Activated CD8-positive, alpha-beta T cell treated with anti-CD3 and anti-CD28 coated beads for 36 hours (primary cell): ENCODE measurements at regions of chr2 and their contacts with region 1.

Region 1: GRCh38 chr2:172931918-172932520 is 143.6 kb upstream of the MAP3K20 start:
- DNase-seq: peak; percentile 86
- ATAC-seq: peak; percentile 74
- H3K4me3 Mint-ChIP-seq: no peak overlapping the region
- H3K27ac Mint-ChIP-seq: no peak overlapping the region
- H3K4me1 Mint-ChIP-seq: peaks cover 9% of the 10 kb centered on the region
- H3K27me3 Mint-ChIP-seq: peaks cover 1% of the 10 kb centered on the region
- CTCF ChIP-seq: peak; percentile 69

Region 2: GRCh38 chr2:172806493-172806892 is 125.5 kb before region 1 on chr2:
- CTCF ChIA-PET with region 1: interaction called, 103 read pairs
- POLR2A ChIA-PET with region 1: no interaction called
- intact Hi-C with region 1: loop called (anchors 2 kb)
- DNase-seq: no peak
- ATAC-seq: no peak
- H3K4me3 Mint-ChIP-seq: no peak overlapping the region
- H3K27ac Mint-ChIP-seq: no peak overlapping the region
- H3K4me1 Mint-ChIP-seq: no peaks in the 10 kb centered on the region
- H3K27me3 Mint-ChIP-seq: no peaks in the 10 kb centered on the region
- CTCF ChIP-seq: peak; percentile 79

Region 3: DNA sequence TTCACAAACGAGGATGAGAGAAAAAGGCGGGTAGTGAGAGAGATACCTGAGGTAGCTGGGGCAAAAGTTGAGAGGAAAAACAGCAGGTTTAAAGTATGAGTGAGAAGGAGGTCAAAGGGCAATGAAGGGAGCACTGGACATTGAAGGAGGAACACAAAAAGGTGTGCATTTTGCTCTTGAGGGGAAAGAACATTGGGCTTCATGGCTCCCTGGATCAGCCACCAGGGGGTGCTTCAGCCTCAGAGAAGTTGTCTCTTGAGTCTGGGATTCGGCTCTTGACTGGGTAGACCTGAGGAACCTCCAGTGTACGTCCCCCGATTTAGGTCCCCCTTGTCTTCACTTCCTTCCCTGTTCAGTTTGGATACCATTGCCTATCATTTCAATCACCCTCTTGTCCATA is 67.8 kb before region 1 on chr2:
- CTCF ChIA-PET with region 1: interaction called, 50 read pairs
- POLR2A ChIA-PET with region 1: no interaction called
- intact Hi-C with region 1: loop called (anchors 2 kb)
- DNase-seq: peak; percentile 78
- ATAC-seq: peak; percentile 58
- H3K4me3 Mint-ChIP-seq: no peak overlapping the region
- H3K27ac Mint-ChIP-seq: no peak overlapping the region
- H3K4me1 Mint-ChIP-seq: no peaks in the 10 kb centered on the region
- H3K27me3 Mint-ChIP-seq: peaks cover 18% of the 10 kb centered on the region
- CTCF ChIP-seq: peak; percentile 55

Region 4: GRCh38 chr2:172878260-172878659 is 53.8 kb before region 1 on chr2:
- CTCF ChIA-PET with region 1: interaction called, 17 read pairs
- POLR2A ChIA-PET with region 1: no interaction called
- intact Hi-C with region 1: no loop called
- DNase-seq: no peak
- ATAC-seq: no peak
- H3K4me3 Mint-ChIP-seq: no peak overlapping the region
- H3K27ac Mint-ChIP-seq: no peak overlapping the region
- H3K4me1 Mint-ChIP-seq: peaks cover 10% of the 10 kb centered on the region
- H3K27me3 Mint-ChIP-seq: peaks cover 7% of the 10 kb centered on the region
- CTCF ChIP-seq: no peak

Region 5: GRCh38 chr2:172921532-172922236 is 10.3 kb before region 1 on chr2:
- CTCF ChIA-PET with region 1: interaction called, 60 read pairs
- POLR2A ChIA-PET with region 1: interaction called, 3 read pairs
- intact Hi-C with region 1: no loop called
- DNase-seq: no peak
- ATAC-seq: no peak
- H3K4me3 Mint-ChIP-seq: no peak overlapping the region
- H3K27ac Mint-ChIP-seq: no peak overlapping the region
- H3K4me1 Mint-ChIP-seq: no peaks in the 10 kb centered on the region
- H3K27me3 Mint-ChIP-seq: peaks cover 2% of the 10 kb centered on the region
- CTCF ChIP-seq: no peak

Region 6: GRCh38 chr2:172964511-172965139 is 32.6 kb after region 1 on chr2:
- CTCF ChIA-PET with region 1: interaction called, 20 read pairs
- POLR2A ChIA-PET with region 1: interaction called, 3 read pairs
- intact Hi-C with region 1: no loop called
- DNase-seq: no peak
- ATAC-seq: no peak
- H3K4me3 Mint-ChIP-seq: no peak overlapping the region
- H3K27ac Mint-ChIP-seq: no peak overlapping the region
- H3K4me1 Mint-ChIP-seq: peaks cover 28% of the 10 kb centered on the region
- H3K27me3 Mint-ChIP-seq: no peaks in the 10 kb centered on the region
- CTCF ChIP-seq: no peak